ENCODE measurements at regions of chr3 and their contacts with region 1.

Region 1: GRCh38 chr3:146640955-146641867 is 36.1 kb upstream of the PLSCR5 start:
- DNase-seq: no peak
- ATAC-seq: no peak

Region 2: DNA sequence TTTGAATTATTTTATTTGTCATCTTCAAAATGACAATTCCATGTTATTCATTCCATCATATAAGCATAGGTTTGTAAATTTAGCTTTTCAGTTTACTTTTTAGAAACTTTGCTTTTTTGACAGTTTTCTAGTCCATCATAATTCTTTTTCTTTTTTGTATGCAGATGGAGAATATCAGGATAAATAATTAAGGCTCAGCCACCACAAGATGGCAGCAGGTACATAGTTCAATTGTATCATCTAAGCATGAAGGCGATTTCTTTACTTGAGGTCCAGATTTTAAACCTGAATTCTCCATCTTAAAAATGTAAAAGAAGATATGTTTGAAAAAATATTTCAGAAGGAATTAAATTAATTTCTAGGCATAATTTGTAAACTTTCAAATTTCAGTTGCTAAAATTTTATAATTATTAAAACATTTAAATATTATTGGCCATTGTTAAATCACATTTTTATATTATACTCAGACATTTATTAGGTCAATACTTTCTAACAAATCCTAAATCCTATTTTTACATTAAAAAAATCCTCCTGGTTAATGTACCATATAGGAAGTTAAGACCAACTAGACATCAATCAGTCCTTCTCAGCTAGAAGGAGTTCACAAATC is 51.2 kb before region 1 on chr3:
- intact Hi-C with region 1: loop called (anchors 2 kb)
- DNase-seq: no peak
- ATAC-seq: no peak